Activated CD4-positive, alpha-beta T cell treated with anti-CD3 and anti-CD28 coated beads, Interleukin-2, amount 10 ng/mL, durations not matched to agents 24 days and 14 days (primary cell): ENCODE measurements at regions of chrX and their contacts with region 1.

Region 1: DNA sequence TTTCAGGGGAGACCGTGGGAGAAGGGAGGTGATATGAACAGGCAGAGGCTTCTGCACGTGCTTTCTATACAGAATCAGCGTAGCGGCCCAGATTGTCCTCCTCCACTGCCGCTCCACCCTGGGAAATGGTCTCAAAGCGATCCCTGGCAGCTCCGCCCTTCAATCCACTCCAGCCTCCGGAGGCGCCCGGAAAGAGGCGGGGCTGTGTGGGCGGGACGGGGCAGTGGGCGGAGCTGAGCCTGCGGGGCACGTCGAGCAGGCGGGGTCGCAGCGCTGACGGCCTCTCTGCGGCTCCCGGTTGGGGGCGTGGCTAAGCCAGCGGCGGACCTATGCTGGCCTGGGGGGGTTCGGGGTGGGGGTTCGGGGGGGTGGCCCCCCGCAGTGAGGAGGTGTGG is 210 bp upstream of the SMIM10L2A start:
- DNase-seq: peak; percentile 97
- H3K4me3 Mint-ChIP-seq: peak overlapping the region; percentile 68
- H3K27ac Mint-ChIP-seq: no peak overlapping the region
- H3K4me1 Mint-ChIP-seq: peaks cover 7% of the 10 kb centered on the region
- H3K27me3 Mint-ChIP-seq: peaks cover 13% of the 10 kb centered on the region

Region 2: GRCh38 chrX:135308345-135308855 is 113.1 kb before region 1 on chrX:
- intact Hi-C with region 1: no loop called
- DNase-seq: no peak
- H3K4me3 Mint-ChIP-seq: no peak overlapping the region
- H3K27ac Mint-ChIP-seq: no peak overlapping the region
- H3K4me1 Mint-ChIP-seq: no peaks in the 10 kb centered on the region
- H3K27me3 Mint-ChIP-seq: no peaks in the 10 kb centered on the region

Region 3: DNA sequence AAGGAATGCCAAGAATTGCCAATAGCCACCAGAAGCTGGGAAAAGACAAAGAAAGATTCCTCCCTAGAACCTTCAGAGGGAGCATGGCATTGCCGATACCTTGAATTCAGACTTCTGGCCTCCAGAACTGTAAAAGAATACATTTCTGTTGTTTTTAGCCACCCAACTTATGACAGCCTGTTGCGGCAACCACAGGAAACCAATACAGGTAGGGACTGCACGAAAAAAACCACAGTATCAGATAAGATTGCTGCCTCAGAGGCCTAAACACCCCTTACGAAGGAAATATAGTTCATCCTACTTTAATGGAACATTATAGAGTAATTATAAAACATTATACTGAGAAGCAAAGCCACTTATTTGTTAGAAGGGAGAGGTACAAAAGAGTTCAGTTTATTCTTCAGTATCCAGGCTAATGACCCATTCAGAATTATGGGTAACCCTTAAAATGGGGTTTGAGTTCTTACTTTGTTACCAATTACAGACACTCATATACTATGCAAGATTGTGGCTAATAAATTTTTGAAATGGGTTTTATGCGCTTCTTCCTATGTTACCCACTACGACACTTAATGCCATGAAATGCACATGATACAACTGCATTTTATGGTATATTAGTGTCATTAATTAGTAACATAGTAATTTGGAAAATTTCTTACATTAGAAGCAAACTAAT is 37.2 kb before region 1 on chrX:
- intact Hi-C with region 1: loop called (anchors 2 kb)
- DNase-seq: peak; percentile 85
- H3K4me3 Mint-ChIP-seq: peak overlapping the region; percentile 75
- H3K27ac Mint-ChIP-seq: peak overlapping the region; percentile 85
- H3K4me1 Mint-ChIP-seq: peaks cover 33% of the 10 kb centered on the region
- H3K27me3 Mint-ChIP-seq: no peaks in the 10 kb centered on the region

Region 4: DNA sequence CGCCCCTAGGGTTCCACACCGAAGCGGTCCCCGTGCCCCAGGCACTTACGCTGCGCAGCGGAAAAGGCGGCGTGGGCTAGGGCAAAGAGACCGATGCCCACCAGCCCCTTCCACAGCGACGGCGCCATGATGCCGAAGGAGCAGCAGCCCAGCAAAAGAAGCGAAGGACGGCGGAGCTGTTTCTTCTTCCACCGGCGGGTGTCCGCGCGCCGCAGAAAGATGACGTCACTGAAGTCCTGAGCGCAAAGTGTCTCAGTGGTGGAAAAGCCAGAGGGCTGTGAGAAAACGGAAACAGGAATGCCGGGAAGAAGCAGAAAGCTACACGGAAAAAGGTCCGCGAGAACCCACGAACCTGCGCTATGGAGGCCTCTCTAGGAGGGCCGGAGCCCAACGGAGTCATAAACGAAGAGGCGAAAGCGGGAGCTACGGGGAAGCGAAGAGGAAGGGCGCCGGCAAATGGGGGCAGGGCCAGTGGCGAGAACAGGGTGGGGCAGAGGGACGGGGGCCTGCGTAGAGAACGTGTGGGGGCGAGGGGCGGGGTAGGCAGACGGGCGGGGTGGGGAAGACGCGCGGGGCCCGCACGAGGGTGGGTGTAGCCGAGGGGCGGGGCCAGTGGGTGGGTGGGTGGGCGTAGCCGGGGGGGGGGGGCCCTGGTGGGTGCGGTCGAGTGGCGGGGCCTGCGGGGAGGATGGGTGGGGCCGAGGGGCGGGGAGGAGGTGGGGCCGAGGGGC is 552.2 kb after region 1 on chrX and contains the start of gene MMGT1:
- intact Hi-C with region 1: loop called (anchors 10 kb)
- DNase-seq: peak; percentile 93
- H3K4me3 Mint-ChIP-seq: peak within 1 kb of the TSS; percentile 100
- H3K27ac Mint-ChIP-seq: peak within 1 kb of the TSS; percentile 99
- H3K4me1 Mint-ChIP-seq: peaks cover 28% of the 10 kb centered on the region
- H3K27me3 Mint-ChIP-seq: peaks cover 3% of the 10 kb centered on the region
- total RNA-seq, gene MMGT1: 27.1 and 27.4 TPM in 2 replicates